HCT116 (cell line): ENCODE measurements at regions of chr14 and their contacts with region 1.

Region 1: DNA sequence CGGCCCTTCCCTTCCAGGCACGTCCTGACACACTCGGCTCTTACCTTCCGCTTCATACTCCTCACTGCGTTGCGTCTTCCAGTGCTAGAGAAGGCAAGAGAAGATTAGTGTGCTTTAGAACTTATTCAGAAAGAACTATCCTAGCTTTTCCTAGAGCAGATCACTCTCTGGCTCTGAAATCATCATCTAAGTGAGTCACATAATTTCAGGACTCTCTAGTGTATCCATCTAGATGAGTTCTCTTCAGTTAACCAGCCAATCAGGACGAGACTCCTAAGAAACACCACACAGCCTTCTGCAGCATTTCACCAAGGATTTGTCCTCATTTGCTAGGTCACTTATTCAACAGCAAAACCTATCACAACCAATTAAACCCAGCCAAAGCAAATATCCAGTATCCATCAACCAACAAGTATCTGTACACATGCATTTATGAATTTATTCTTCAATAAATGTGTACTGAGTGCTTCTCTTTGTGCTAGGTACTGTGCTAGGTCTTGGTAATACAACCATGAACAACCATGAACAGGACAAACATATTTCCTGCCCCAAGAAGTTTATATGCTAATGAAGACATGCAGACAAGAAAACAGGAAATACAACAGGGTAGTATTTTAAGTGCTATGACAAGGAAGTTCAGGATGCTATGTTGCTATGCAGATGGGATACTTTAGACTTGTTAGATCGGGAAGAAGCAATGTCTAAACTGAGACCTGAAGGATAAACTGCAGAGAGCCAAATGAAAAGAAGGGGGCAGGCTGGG is 52.1 kb downstream of the NIN start:
- DNase-seq: no peak
- ATAC-seq: no peak
- H3K4me3 ChIP-seq: no peak overlapping the region
- H3K27ac ChIP-seq: no peak overlapping the region
- H3K4me1 ChIP-seq: peaks cover 3 to 12% of the 10 kb centered on the region in 2 experiments; a peak in 3 of 4 replicates
- H3K27me3 ChIP-seq: no peaks in the 10 kb centered on the region
- CTCF ChIP-seq: no peak
- POLR2A ChIP-seq: no peak
- RAD21 ChIP-seq: no peak

Region 2: GRCh38 chr14:50542941-50543418 is 235.9 kb before region 1 on chr14:
- CTCF ChIA-PET with region 1: interaction called, 15 read pairs
- POLR2A ChIA-PET with region 1: no interaction called
- RAD21 ChIA-PET with region 1: no interaction called
- intact Hi-C with region 1: loop called (anchors 1 kb)
- DNase-seq: peak; percentile 51
- ATAC-seq: peak; percentile 96
- H3K4me3 ChIP-seq: no peak overlapping the region
- H3K27ac ChIP-seq: no peak overlapping the region
- H3K4me1 ChIP-seq: peaks cover 10 to 13% of the 10 kb centered on the region in 2 experiments
- H3K27me3 ChIP-seq: no peaks in the 10 kb centered on the region
- CTCF ChIP-seq: peak; percentile 48 to 64 (median 57); a peak in 5 of 6 replicates
- POLR2A ChIP-seq: no peak
- RAD21 ChIP-seq: peak; percentile 64

Region 3: DNA sequence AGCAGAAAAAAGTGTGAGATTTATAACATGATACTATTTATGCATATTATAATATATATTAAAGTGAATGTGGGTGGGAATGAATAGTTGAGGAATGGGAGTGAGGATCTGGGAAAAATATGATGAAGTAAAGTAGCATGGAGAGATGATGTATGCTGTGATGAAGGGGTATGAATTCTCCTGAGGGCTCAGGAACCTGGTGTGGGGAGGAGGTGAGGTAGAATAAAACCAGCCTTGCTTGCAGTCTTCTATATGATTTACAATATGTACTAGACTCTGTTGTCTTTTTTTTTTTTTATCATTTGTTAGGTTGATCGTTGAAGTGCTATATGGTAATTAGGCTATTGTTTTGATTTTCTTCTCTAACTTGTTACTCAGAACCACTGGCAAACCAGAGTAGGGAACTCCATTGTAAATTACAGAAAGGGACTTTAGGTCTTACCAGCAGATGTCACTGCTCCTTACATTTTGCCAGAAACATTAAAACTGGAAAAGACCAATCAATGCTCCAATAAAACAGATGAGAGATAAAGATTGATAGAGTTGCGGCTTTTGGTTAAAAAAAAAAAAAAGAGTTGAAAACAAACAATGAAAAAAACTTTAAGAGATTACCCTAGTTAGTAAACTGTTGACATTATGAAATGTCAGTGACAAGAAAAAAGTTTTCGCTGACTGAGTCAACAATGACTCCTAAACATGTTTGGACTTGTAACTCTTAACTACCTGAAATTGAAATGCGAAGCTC is 179.0 kb before region 1 on chr14:
- CTCF ChIA-PET with region 1: interaction called, 33 read pairs
- POLR2A ChIA-PET with region 1: no interaction called
- RAD21 ChIA-PET with region 1: interaction called, 5 to 8 read pairs
- intact Hi-C with region 1: loop called (anchors 1 kb)
- DNase-seq: peak; percentile 38
- ATAC-seq: peak; percentile 78
- H3K4me3 ChIP-seq: 0 out of 4 replicates have a peak overlapping the region, but pooled peaks of 1 of the 2 experiments have one; percentile 4
- H3K27ac ChIP-seq: peak overlapping the region; percentile 45; the same call in 1 of the 2 replicates
- H3K4me1 ChIP-seq: peaks cover 16 to 19% of the 10 kb centered on the region in 2 experiments
- H3K27me3 ChIP-seq: no peaks in the 10 kb centered on the region
- CTCF ChIP-seq: peak; percentile 61 to 79 (median 68); a peak in 5 of 6 replicates
- POLR2A ChIP-seq: no peak
- RAD21 ChIP-seq: peak; percentile 74